ENCODE measurements at regions of chr1 and their contacts with region 1.

Region 1: DNA sequence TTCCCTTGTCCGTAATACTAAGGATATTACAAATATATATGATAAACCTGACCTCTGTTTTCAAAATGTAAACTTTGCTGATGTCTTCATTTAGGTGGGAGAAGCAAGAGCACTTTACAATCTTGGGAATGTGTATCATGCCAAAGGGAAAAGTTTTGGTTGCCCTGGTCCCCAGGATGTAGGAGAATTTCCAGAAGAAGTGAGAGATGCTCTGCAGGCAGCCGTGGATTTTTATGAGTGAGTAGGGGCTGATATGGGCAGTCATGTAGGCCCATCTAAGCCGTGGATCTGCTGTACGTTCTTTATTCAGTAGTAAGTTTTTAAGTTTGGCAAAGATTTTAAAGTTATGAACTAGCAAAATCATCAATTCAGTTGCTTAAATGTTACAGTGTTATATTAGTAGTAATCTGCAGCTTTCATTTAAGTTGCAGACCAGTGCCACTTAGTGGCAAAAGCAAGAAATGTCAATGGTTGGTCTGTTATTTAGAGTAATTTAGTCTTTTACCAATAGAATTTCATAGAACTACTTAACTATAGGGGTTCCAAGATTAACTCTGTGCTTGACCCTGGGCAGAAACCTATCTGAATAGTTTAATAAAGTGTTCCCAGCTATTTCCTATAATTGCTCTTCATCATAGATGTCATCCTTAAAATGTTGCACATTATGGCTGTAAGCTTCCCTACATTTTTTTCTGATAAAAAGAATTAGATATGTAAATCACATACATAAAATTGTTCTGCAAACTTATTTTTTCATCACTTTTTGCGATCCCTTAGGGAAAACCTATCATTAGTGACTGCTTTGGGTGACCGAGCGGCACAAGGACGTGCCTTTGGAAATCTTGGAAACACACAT is 21.3 kb downstream of the GPSM2 start:
- DNase-seq: peak in 5 of 9 experiments; percentile 9 to 74 (median 35)
- ATAC-seq: peak; percentile 78
- H3K4me3 ChIP-seq: no peak overlapping the region
- H3K4me3 Mint-ChIP-seq: no peak overlapping the region
- H3K27ac ChIP-seq: no peak overlapping the region
- H3K27ac Mint-ChIP-seq: no peak overlapping the region
- H3K4me1 ChIP-seq: no peaks in the 10 kb centered on the region
- H3K4me1 Mint-ChIP-seq: no peaks in the 10 kb centered on the region
- H3K27me3 ChIP-seq: no peaks in the 10 kb centered on the region
- H3K27me3 Mint-ChIP-seq: peaks cover 2% of the 10 kb centered on the region
- CTCF ChIP-seq: peak; percentile 68

Region 2: GRCh38 chr1:108512239-108512981 is 385.7 kb before region 1 on chr1:
- CTCF ChIA-PET with region 1: interaction called, 3 read pairs
- POLR2A ChIA-PET with region 1: no interaction called
- intact Hi-C with region 1: loop called (anchors 1 kb)
- DNase-seq: peak in 2 of 9 experiments; percentile 65 to 75
- ATAC-seq: peak; percentile 69
- H3K4me3 ChIP-seq: no peak overlapping the region
- H3K4me3 Mint-ChIP-seq: no peak overlapping the region
- H3K27ac ChIP-seq: no peak overlapping the region
- H3K27ac Mint-ChIP-seq: no peak overlapping the region
- H3K4me1 ChIP-seq: no peaks in the 10 kb centered on the region
- H3K4me1 Mint-ChIP-seq: no peaks in the 10 kb centered on the region
- H3K27me3 ChIP-seq: no peaks in the 10 kb centered on the region
- H3K27me3 Mint-ChIP-seq: peaks cover 21% of the 10 kb centered on the region
- CTCF ChIP-seq: peak; percentile 99

Region 3: GRCh38 chr1:108877348-108878159 is 20.5 kb before region 1 on chr1:
- CTCF ChIA-PET with region 1: interaction called, 5 read pairs
- POLR2A ChIA-PET with region 1: no interaction called
- intact Hi-C with region 1: loop called in 1 of 2 experiments (anchors 2 kb)
- DNase-seq: peak in 2 of 9 experiments; percentile 14 to 19
- ATAC-seq: no peak
- H3K4me3 ChIP-seq: peak overlapping the region; percentile 69 to 80
- H3K4me3 Mint-ChIP-seq: peak overlapping the region; percentile 95
- H3K27ac ChIP-seq: peak overlapping the region; percentile 18 to 24
- H3K27ac Mint-ChIP-seq: peak overlapping the region; percentile 46
- H3K4me1 ChIP-seq: peaks cover 6% of the 10 kb centered on the region
- H3K4me1 Mint-ChIP-seq: peaks cover 12% of the 10 kb centered on the region
- H3K27me3 ChIP-seq: peaks cover 0 to under 1% of the 10 kb centered on the region in 2 experiments
- H3K27me3 Mint-ChIP-seq: peaks cover 4% of the 10 kb centered on the region
- CTCF ChIP-seq: no peak

Region 4: DNA sequence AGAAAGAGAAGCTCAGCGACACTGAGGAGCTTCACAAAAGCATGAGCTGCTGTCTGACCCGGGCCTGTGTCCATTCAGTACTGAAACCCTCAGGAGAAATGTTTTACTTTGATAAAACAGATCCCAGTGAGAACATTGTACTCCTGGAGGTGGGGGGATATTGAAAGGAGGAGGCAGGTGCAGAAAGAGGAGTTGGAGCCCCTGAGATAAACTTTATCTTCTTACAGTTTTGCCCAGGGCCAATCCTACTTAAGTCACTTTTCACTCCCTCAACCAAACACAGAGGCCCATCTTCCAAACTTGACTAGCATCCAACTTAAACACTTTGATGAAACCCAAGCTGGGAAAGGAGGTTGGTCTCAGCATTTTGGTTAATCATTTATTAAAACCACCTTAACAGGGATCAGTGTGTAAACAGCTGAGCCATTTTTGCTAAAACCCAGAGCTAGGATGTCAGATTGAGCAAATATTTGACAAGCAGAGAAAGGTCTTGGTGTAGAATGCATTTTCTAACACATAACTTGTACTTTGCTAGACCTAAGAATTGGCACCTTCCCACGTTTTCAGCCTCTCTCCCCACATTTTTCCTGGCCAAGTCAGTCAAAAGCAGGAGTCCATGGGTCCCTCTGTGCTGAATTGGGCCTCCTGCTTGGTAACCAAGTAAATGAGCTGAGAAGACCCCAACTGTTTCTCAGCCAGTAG is 283.2 kb after region 1 on chr1:
- CTCF ChIA-PET with region 1: no interaction called
- POLR2A ChIA-PET with region 1: no interaction called
- intact Hi-C with region 1: no loop called
- DNase-seq: no peak
- ATAC-seq: no peak
- H3K4me3 ChIP-seq: no peak overlapping the region
- H3K4me3 Mint-ChIP-seq: no peak overlapping the region
- H3K27ac ChIP-seq: no peak overlapping the region
- H3K27ac Mint-ChIP-seq: no peak overlapping the region
- H3K4me1 ChIP-seq: no peaks in the 10 kb centered on the region
- H3K4me1 Mint-ChIP-seq: no peaks in the 10 kb centered on the region
- H3K27me3 ChIP-seq: no peaks in the 10 kb centered on the region
- H3K27me3 Mint-ChIP-seq: no peaks in the 10 kb centered on the region
- CTCF ChIP-seq: no peak